Naive thymus-derived CD4-positive, alpha-beta T cell (primary cell): ENCODE measurements at regions of chr20 and their contacts with region 1.

Region 1: DNA sequence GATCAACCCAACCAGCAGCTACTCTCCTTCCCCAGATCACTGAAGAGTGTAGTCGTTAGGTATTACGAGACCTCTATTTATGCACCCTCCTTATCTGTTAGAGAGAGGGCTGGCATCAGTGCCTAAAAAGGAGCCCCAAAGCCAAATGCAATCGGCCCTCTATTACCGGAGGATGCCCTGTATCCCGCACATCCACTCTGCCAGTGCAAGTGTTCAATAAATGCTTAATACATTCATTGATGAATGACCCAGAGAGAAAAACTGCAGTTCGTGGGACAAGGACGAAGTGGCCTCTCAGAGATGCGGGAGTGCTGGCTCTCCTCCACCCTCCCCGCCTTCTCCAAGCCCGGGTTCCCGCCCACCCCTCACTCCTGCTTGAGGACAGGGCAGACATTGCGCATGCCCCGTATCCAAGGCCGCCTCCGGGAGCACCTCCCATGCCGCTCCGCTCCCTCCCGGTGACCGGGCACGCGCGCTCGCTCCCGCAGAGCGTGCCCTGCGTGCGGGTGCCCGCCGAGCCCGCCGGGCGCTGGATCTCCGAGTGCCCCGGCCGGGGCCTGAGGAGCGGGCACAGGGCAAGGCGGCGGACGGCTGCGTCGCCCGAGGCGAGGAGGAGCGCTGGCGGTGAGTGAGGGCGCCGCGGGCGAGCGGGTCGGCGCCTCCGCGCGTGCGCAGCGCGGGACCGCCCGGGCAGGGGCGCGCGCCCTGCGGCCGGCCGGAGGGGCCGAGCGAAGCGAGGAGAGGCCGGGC is 27.2 kb upstream of the BTBD3 start:
- DNase-seq: peak in 8 of 9 donors; percentile 29 to 80 (median 44)
- ATAC-seq: peak; percentile 74
- H3K4me3 ChIP-seq: peak overlapping the region; percentile 26
- H3K4me3 Mint-ChIP-seq: peak overlapping the region; percentile 71 to 90 (median 82)
- H3K27ac ChIP-seq: no peak overlapping the region
- H3K27ac Mint-ChIP-seq: peak overlapping the region in 5 of 9 donors; percentile 1 to 71 (median 43)
- H3K4me1 ChIP-seq: no peaks in the 10 kb centered on the region
- H3K4me1 Mint-ChIP-seq: peaks cover 0 to 24% (median 20%) of the 10 kb centered on the region in 7 donors
- H3K27me3 ChIP-seq: no peaks in the 10 kb centered on the region
- H3K27me3 Mint-ChIP-seq: peaks cover 0 to 30% (median 21%) of the 10 kb centered on the region in 5 donors

Region 2: DNA sequence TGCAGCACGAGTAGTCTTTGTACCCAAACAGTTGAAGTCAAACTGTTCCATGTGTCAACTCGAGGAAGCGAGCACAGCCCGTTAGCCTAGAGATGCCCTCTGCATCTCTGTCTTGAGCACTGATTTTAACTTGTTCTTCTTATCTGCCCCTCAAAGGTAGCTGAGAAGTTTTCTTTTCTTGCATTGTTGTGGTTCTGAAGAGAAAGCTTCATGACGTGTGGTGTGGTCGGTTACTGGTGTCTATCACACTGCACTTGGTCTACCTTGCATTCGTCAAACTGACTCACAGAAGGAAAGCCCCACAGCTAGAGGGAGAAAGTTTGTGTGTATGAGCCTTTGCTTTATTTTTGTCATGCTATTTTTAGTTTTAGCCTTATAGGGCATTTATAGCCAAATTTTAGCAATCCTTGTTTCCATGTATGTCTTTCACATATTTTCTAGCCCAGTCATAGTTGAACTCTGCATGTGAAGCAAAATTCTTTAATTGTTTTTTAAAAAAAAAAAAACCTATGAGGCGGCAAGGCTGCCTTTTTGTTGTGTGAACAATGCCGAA is 1331.8 kb before region 1 on chr20:
- CTCF ChIA-PET with region 1: no interaction called
- POLR2A ChIA-PET with region 1: no interaction called
- intact Hi-C with region 1: loop called in 1 of 2 experiments (anchors 5 kb)
- DNase-seq: peak in 5 of 9 donors; percentile 4 to 45 (median 11)
- ATAC-seq: peak; percentile 78
- H3K4me3 ChIP-seq: no peak overlapping the region
- H3K4me3 Mint-ChIP-seq: peak overlapping the region in 1 of 10 donors; percentile 57
- H3K27ac ChIP-seq: no peak overlapping the region
- H3K27ac Mint-ChIP-seq: peak overlapping the region in 4 of 9 donors; percentile 18 to 45 (median 26)
- H3K4me1 ChIP-seq: no peaks in the 10 kb centered on the region
- H3K4me1 Mint-ChIP-seq: peaks cover 5 to 36% (median 13%) of the 10 kb centered on the region in 7 donors
- H3K27me3 ChIP-seq: no peaks in the 10 kb centered on the region
- H3K27me3 Mint-ChIP-seq: peaks cover 0 to 2% (median 0%) of the 10 kb centered on the region in 5 donors

Region 3: DNA sequence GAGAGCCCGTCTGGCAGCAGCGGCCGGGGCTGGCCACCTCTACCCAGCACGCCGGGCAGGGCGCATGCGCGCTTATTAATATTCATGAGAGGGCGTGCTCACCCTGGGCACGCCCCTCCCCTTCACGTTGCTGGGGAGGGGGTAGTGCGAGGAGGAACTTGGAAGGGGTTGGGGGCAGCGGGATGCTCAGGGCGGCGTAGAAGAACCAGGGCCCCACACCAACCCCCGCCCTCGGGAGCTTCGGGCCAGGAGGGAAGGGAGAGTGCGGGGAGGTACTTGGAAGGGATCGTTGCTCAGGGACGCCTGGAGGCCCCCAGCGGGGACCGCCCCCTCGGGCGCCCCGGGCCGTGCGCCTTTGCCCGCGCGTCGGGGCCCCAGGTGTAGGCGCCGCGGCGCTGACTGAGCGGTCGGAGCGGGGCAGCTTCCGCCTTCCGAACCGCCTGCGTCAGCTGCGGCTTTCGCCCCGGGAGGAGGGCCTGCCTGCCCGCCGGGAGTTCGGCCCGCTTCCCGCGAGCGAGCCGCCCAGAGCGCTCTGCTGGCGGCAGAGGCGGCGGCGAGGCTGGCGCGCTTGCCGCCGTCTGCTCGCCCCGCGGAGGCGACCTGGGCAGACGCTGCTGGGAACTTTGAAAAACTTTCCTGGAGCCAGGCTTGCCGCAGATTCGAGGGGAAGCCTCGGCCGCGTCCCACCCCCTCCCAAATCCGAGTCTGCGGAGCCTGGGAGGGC is 1216.4 kb before region 1 on chr20 and contains the start of gene JAG1:
- CTCF ChIA-PET with region 1: no interaction called
- POLR2A ChIA-PET with region 1: no interaction called
- intact Hi-C with region 1: loop called in 1 of 2 experiments (anchors 5 kb)
- DNase-seq: peak in 2 of 9 donors; percentile 51 to 86
- ATAC-seq: peak; percentile 74
- H3K4me3 ChIP-seq: peak within 1 kb of the TSS; percentile 30
- H3K4me3 Mint-ChIP-seq: peak within 1 kb of the TSS; percentile 48 to 94 (median 74)
- H3K27ac ChIP-seq: no peak within 1 kb of the TSS
- H3K27ac Mint-ChIP-seq: peak within 1 kb of the TSS in 1 of 9 donors; percentile 82
- H3K4me1 ChIP-seq: no peaks in the 10 kb centered on the region
- H3K4me1 Mint-ChIP-seq: peaks cover 0 to 27% (median 18%) of the 10 kb centered on the region in 7 donors
- H3K27me3 ChIP-seq: peaks cover 11 to 12% of the 10 kb centered on the region in 2 donors
- H3K27me3 Mint-ChIP-seq: peaks cover 59 to 77% (median 59%) of the 10 kb centered on the region in 5 donors
- total RNA-seq, gene JAG1: 0.46 to 7.0 (median 2.6) TPM in 3 of 5 experiments, not detected in the others

Region 4: GRCh38 chr20:11660673-11661072 is 229.8 kb before region 1 on chr20:
- CTCF ChIA-PET with region 1: no interaction called
- POLR2A ChIA-PET with region 1: no interaction called
- intact Hi-C with region 1: no loop called
- DNase-seq: no peak
- ATAC-seq: no peak
- H3K4me3 ChIP-seq: no peak overlapping the region
- H3K4me3 Mint-ChIP-seq: no peak overlapping the region
- H3K27ac ChIP-seq: no peak overlapping the region
- H3K27ac Mint-ChIP-seq: no peak overlapping the region
- H3K4me1 ChIP-seq: no peaks in the 10 kb centered on the region
- H3K4me1 Mint-ChIP-seq: no peaks in the 10 kb centered on the region
- H3K27me3 ChIP-seq: no peaks in the 10 kb centered on the region
- H3K27me3 Mint-ChIP-seq: no peaks in the 10 kb centered on the region

Region 5: GRCh38 chr20:11912013-11912658 is 21.6 kb after region 1 on chr20:
- CTCF ChIA-PET with region 1: no interaction called
- POLR2A ChIA-PET with region 1: no interaction called
- intact Hi-C with region 1: loop called in 1 of 2 experiments (anchors 1 kb)
- DNase-seq: peak in 2 of 9 donors; percentile 12 to 13
- ATAC-seq: peak; percentile 41
- H3K4me3 ChIP-seq: no peak overlapping the region
- H3K4me3 Mint-ChIP-seq: no peak overlapping the region
- H3K27ac ChIP-seq: no peak overlapping the region
- H3K27ac Mint-ChIP-seq: no peak overlapping the region
- H3K4me1 ChIP-seq: no peaks in the 10 kb centered on the region
- H3K4me1 Mint-ChIP-seq: peaks cover 0 to 15% (median 8%) of the 10 kb centered on the region in 7 donors
- H3K27me3 ChIP-seq: no peaks in the 10 kb centered on the region
- H3K27me3 Mint-ChIP-seq: no peaks in the 10 kb centered on the region

Region 6: DNA sequence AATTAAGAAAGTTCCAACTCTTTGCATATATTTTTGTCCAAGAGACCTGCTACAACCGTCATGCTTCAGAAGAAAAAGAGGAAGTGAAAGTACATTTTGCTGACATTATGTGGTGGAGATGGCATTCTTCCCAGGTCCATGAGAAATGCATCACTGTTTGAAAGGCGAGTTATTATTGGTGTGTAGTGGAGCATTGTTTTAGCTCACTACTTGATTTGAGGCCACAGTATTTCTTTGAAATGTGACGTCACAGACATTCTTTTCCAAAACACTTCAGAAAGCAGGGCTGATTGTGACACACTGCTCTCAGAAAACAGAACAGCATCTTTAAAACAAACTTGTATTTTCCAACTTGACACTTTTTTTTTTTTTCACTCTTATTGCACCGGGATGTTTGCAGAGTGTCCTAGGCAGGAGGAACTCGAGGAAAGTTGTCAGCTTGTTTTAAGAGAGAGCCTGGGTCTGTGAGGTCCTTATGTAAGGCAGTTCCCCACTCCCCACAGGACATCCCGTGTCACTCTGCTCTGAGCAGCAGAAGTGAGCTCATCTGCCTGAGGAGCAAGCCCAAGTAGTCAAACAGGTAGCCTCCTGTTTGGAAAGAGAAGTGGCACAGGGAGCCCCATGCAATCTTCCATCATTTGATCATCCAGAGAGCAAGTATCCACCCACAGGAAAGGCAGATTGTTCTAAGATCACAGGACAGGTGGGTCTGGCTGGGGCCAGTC is 1119.3 kb after region 1 on chr20:
- CTCF ChIA-PET with region 1: no interaction called
- POLR2A ChIA-PET with region 1: no interaction called
- intact Hi-C with region 1: loop called in 1 of 2 experiments (anchors 5 kb)
- DNase-seq: peak in 7 of 9 donors; percentile 12 to 52 (median 31)
- ATAC-seq: peak; percentile 77
- H3K4me3 ChIP-seq: peak overlapping the region; percentile 49
- H3K4me3 Mint-ChIP-seq: peak overlapping the region; percentile 74 to 85 (median 80)
- H3K27ac ChIP-seq: peak overlapping the region; percentile 38
- H3K27ac Mint-ChIP-seq: peak overlapping the region; percentile 58 to 92 (median 69)
- H3K4me1 ChIP-seq: no peaks in the 10 kb centered on the region
- H3K4me1 Mint-ChIP-seq: peaks cover 13 to 40% (median 31%) of the 10 kb centered on the region in 7 donors
- H3K27me3 ChIP-seq: no peaks in the 10 kb centered on the region
- H3K27me3 Mint-ChIP-seq: peaks cover 0 to 6% (median 0%) of the 10 kb centered on the region in 5 donors

Region 7: DNA sequence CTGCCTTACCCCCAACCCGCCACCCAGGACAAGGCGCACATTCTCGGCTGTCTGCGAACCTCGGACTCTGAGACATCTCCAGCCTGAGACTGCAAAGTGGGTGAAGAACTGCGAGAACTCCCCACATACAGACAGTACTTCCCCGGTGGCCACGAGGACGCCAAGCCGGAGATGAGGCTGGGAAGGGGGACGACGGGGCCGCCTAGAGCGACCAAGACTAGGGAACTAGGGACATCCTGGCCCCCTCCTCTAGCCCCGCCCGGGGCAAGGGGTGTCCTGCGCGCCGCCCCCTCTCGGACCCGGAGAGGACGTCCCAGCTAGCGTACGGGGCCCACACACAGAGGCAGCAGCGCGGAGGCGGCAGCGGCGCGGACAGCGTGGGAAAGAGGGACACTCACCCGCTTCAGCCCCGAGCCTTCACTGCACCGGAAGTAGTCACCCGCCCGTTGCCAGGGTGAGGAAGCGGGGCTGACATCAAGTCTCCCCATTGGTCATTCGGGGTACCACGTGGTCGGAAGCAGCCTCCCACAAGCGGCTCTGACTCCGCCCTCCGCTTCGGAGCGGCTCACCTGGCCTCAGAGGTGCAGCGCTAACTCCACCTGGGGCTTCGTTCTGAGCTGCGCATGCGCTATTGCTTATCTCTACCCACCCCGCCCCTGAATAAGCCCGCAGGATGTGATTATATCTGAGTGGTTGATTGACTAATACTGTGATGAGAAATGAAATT is 1748.2 kb after region 1 on chr20 and contains the start of gene TASP1:
- CTCF ChIA-PET with region 1: no interaction called
- POLR2A ChIA-PET with region 1: no interaction called
- intact Hi-C with region 1: loop called in 1 of 2 experiments (anchors 5 kb)
- DNase-seq: peak; percentile 90 to 98 (median 96)
- ATAC-seq: peak; percentile 100
- H3K4me3 ChIP-seq: peak within 1 kb of the TSS; percentile 71
- H3K4me3 Mint-ChIP-seq: peak within 1 kb of the TSS; percentile 85 to 94 (median 90)
- H3K27ac ChIP-seq: peak within 1 kb of the TSS; percentile 76
- H3K27ac Mint-ChIP-seq: peak within 1 kb of the TSS; percentile 37 to 95 (median 83)
- H3K4me1 ChIP-seq: peaks cover 0 to 7% of the 10 kb centered on the region in 2 donors
- H3K4me1 Mint-ChIP-seq: peaks cover 7 to 36% (median 27%) of the 10 kb centered on the region in 7 donors
- H3K27me3 ChIP-seq: no peaks in the 10 kb centered on the region
- H3K27me3 Mint-ChIP-seq: peaks cover 0 to 10% (median 3%) of the 10 kb centered on the region in 5 donors
- total RNA-seq, gene TASP1: 10.6 to 14.3 (median 13.3) TPM

Region 8: GRCh38 chr20:13784893-13785715 is 1894.6 kb after region 1 on chr20 and contains the starts of genes ESF1 and NDUFAF5:
- CTCF ChIA-PET with region 1: no interaction called
- POLR2A ChIA-PET with region 1: no interaction called
- intact Hi-C with region 1: loop called in 1 of 2 experiments (anchors 10 kb)
- DNase-seq: peak; percentile 71 to 93 (median 90)
- ATAC-seq: peak; percentile 99
- H3K4me3 ChIP-seq: peak within 1 kb of the TSS; percentile 83
- H3K4me3 Mint-ChIP-seq: peak within 1 kb of the TSS; percentile 92 to 100 (median 99)
- H3K27ac ChIP-seq: peak within 1 kb of the TSS; percentile 91
- H3K27ac Mint-ChIP-seq: peak within 1 kb of the TSS; percentile 91 to 98 (median 96)
- H3K4me1 ChIP-seq: peaks cover 14 to 21% of the 10 kb centered on the region in 2 donors
- H3K4me1 Mint-ChIP-seq: peaks cover 32 to 85% (median 69%) of the 10 kb centered on the region in 7 donors
- H3K27me3 ChIP-seq: no peaks in the 10 kb centered on the region
- H3K27me3 Mint-ChIP-seq: peaks cover 0 to 2% (median 0%) of the 10 kb centered on the region in 5 donors
- total RNA-seq, gene ESF1: 7.9 to 16.9 (median 14.5) TPM
- total RNA-seq, gene NDUFAF5: 23.8 to 43.6 (median 28.9) TPM